ENCODE measurements at regions of chr9 and their contacts with region 1.

Region 1: GRCh38 chr9:106862825-106863720 is at the start of gene ZNF462:
- DNase-seq: peak in 1 of 2 experiments; percentile 26
- H3K4me3 ChIP-seq: peak within 1 kb of the TSS; percentile 97
- H3K27ac ChIP-seq: no peak within 1 kb of the TSS
- H3K4me1 ChIP-seq: peaks cover 5% of the 10 kb centered on the region; the same call in 1 of the 2 replicates
- H3K27me3 ChIP-seq: no peaks in the 10 kb centered on the region
- CTCF ChIP-seq: peak; percentile 56
- total RNA-seq, gene ZNF462: 3.2 and 4.8 TPM in 2 replicates

Region 2: DNA sequence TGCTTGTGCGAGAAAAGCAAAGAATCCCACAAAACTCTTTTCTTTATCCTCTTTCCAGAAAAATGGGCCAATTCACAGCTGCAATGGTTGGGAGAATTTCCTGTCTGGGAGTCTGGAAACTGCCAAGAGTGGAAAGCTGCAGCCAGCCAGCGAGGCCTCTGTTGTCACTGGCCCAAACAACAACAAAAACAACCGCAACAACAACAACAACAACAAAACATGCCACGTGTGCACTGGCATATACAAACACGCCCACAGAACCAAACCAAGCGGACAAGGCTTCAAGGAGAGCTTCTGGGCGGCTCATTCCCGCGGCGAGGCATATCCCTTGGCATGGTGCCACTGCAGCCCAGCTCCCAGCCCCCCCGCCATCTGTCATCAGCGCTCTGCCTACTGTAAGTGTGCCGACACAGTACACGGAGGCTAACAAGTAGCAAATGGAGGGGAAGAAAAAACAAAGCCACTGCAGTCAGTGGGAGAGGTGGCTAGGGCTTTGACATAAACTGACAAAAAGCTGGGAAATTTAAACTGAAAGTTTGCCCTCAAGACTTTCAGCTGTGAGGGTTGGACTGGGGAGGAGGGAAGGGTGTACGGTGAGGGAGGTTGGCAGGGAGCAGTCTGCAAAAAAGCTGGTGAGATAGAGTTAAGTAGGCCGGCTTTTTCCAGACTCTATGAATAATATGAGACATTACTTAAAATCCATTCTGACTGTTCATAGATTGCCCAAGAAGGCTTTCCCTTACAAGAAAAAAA is 165.1 kb before region 1 on chr9:
- CTCF ChIA-PET with region 1: no interaction called
- POLR2A ChIA-PET with region 1: no interaction called
- intact Hi-C with region 1: no loop called
- DNase-seq: peak in 1 of 2 experiments; percentile 18
- H3K4me3 ChIP-seq: peak overlapping the region; percentile 13; the same call in 1 of the 2 replicates
- H3K27ac ChIP-seq: no peak overlapping the region
- H3K4me1 ChIP-seq: no peaks in the 10 kb centered on the region
- H3K27me3 ChIP-seq: no peaks in the 10 kb centered on the region
- CTCF ChIP-seq: no peak

Region 3: GRCh38 chr9:107044872-107045271 is 181.8 kb after region 1 on chr9:
- CTCF ChIA-PET with region 1: no interaction called
- POLR2A ChIA-PET with region 1: no interaction called
- intact Hi-C with region 1: loop called (anchors 10 kb)
- DNase-seq: no peak
- H3K4me3 ChIP-seq: no peak overlapping the region
- H3K27ac ChIP-seq: no peak overlapping the region
- H3K4me1 ChIP-seq: no peaks in the 10 kb centered on the region
- H3K27me3 ChIP-seq: no peaks in the 10 kb centered on the region
- CTCF ChIP-seq: peak; percentile 51; the same call in 1 of the 2 replicates

Region 4: DNA sequence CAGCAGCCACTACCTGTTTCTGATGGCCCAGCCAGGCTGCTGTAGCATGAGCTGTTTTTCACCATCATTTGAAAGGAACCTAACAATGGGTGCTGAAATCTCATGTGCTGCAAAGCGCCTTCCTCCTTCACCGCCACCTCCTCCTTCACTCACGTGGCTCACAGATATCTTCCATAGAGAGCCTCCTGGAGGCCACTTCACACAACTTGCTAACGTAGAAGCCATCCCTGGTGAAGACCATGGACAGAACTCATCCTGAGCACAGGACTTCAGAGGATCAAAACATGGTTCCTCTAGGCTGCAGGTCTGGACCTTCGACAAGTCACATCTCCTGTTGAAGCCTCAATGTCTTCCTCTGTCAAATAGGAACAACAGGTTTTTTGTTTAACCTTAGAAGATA is 264.5 kb after region 1 on chr9:
- CTCF ChIA-PET with region 1: no interaction called
- POLR2A ChIA-PET with region 1: no interaction called
- intact Hi-C with region 1: loop called (anchors 10 kb)
- DNase-seq: no peak
- H3K4me3 ChIP-seq: no peak overlapping the region
- H3K27ac ChIP-seq: no peak overlapping the region
- H3K4me1 ChIP-seq: peaks cover 10% of the 10 kb centered on the region; the same call in 1 of the 2 replicates
- H3K27me3 ChIP-seq: peaks cover 5% of the 10 kb centered on the region; the same call in 1 of the 2 replicates
- CTCF ChIP-seq: no peak

Measured in PC-9 (cell line).